ENCODE measurements at regions of chr5 and their contacts with region 1.

Region 1: GRCh38 chr5:110757118-110757729 is 18.4 kb downstream of the SLC25A46 start:
- DNase-seq: no peak
- ATAC-seq: no peak
- H3K4me3 ChIP-seq: no peak overlapping the region
- H3K27ac ChIP-seq: no peak overlapping the region
- H3K4me1 ChIP-seq: no peaks in the 10 kb centered on the region
- H3K27me3 ChIP-seq: no peaks in the 10 kb centered on the region

Region 2: DNA sequence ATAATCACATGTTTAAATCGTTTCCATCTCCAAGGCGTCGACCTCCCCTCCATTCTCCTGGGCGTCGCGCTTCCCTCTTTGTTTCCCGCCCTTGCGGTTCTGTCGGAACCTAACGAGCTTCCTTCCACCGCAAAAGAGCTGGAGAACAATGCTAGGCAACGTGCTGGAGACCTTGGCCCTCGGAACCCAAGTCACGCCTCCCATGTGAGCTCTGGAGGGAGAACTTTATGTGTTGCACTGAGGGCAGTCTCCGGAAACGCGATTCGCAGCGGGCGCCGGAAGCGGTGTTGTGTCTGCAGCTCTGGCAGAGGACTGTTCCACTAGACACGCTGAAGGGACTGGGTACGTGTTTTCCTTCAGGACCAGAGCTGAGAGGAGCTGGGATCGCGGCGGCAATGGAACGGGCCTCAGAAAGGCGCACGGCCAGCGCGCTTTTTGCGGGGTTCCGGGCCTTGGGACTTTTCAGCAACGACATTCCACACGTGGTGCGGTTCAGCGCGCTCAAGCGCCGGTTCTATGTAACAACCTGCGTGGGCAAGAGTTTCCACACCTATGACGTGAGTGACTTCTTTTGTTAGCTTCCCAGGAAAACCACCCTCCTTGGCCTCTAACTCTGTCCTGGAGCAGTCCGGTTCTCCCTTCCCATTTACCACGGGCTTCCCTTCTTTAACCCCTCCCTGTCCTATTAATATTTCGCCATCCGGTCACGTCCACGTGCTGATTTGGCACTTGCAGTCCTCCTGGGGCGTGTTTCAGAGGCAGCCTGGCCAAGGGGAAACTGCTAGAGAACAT is 335.0 kb after region 1 on chr5 and contains the start of gene WDR36:
- intact Hi-C with region 1: loop called (anchors 2 to 5 kb)
- DNase-seq: peak; percentile 92 to 94
- ATAC-seq: peak; percentile 100
- H3K4me3 ChIP-seq: peak within 1 kb of the TSS; percentile 43 to 80
- H3K27ac ChIP-seq: peak within 1 kb of the TSS in 1 of 2 donors; percentile 60
- H3K4me1 ChIP-seq: peaks cover 0 to 3% of the 10 kb centered on the region in 2 donors
- H3K27me3 ChIP-seq: no peaks in the 10 kb centered on the region
- total RNA-seq, gene WDR36: 16.7 to 26.1 TPM

Measured in aorta (tissue), 5 donors.